ENCODE measurements at regions of chr2 and their contacts with region 1.

Region 1: DNA sequence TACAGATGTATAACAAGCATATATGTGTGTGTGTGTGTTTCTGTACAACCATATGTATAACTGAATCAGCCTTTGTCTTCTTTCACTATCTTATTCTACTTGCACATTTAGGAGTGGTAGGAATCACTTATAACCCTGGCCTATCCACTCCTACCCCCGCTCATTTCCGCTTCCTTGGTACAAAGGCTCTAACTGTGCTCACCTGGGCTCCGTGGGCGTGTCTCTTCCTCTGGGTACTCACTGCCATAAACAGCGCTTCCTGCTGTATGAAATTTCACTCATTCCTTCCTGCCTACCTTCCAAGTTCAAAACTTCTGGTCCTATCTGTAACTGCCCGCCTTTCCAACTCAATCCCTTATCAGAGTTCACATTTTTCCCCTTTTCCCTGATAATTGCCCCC is 815.5 kb downstream of the EPHA4 start:
- DNase-seq: no peak
- H3K4me3 ChIP-seq: no peak overlapping the region
- H3K27ac ChIP-seq: no peak overlapping the region
- H3K4me1 ChIP-seq: no peaks in the 10 kb centered on the region
- H3K27me3 ChIP-seq: no peaks in the 10 kb centered on the region
- CTCF ChIP-seq: no peak

Region 2: DNA sequence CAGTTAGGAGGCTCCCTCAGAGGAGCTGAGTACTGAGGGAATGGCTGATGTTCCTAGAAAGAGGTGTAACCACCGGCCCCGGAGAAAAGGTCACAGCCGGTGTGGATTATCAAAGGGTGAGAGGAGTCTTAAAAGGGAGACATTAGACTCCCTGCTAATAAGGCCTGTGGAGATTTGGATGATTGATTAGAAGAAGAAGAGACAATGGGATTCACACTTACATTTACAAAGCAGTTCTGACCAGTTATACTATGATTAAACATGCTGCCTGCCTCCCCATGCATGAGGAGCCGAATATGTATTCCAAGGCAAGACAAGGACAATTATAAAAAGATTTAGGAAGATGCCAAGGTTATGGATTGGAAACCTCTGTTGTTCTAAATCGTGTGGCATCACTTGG is 826.8 kb before region 1 on chr2:
- CTCF ChIA-PET with region 1: no interaction called
- POLR2A ChIA-PET with region 1: no interaction called
- intact Hi-C with region 1: no loop called
- DNase-seq: no peak
- H3K4me3 ChIP-seq: no peak overlapping the region
- H3K27ac ChIP-seq: no peak overlapping the region
- H3K4me1 ChIP-seq: no peaks in the 10 kb centered on the region
- H3K27me3 ChIP-seq: no peaks in the 10 kb centered on the region
- CTCF ChIP-seq: no peak

Region 3: DNA sequence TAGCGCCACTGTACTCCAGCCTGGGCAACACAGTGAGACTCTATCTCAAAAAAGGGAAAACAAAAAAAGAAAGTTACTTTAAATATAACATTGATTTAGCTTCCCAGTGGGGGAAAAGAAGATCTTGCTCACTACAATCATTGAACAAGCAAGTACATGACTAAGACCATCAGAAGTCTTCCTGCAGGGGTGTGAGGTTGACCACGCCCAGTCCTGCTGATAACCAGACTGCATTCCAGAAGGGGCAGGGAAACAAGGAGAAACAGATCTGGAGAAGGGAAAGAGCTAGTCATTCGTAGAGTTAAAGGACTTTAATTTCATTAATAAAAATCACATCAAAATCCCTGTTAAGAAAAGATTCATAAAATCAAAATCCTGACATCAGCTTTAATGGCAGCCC is 737.9 kb after region 1 on chr2:
- CTCF ChIA-PET with region 1: no interaction called
- POLR2A ChIA-PET with region 1: interaction called, 10 read pairs
- intact Hi-C with region 1: no loop called
- DNase-seq: no peak
- H3K4me3 ChIP-seq: no peak overlapping the region
- H3K27ac ChIP-seq: no peak overlapping the region
- H3K4me1 ChIP-seq: no peaks in the 10 kb centered on the region
- H3K27me3 ChIP-seq: no peaks in the 10 kb centered on the region
- CTCF ChIP-seq: no peak

Measured in A673 (cell line).